GM13976 (cell line): ENCODE measurements at regions of chr22 and their contacts with region 1.

Region 1: DNA sequence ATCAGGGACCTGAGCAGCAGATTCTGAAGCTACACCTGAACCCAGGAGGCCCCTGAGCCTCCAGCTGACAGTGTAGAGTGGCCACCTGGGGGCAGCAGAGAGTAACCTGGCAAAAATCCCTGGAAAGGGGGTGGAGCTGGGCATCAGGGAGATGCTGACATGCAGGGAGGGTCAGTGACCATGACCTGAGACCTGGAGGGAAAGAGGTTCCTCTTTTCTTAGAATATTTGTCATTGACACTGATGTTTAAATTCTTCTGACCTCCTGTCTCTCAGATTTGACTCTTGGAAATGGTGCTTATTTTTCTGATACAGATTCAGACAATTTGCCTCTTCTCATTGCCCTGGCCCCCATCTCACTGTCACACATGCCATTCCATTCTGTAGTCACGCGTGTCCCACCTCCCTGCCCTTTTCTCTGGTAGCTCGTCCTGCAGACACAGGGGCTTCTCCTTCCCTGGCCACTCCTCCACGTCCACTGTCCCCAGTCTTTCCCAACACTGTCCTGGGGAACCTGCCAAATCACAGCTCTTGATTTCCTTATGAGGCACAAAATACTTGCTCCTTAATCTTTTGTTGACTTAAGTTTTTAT is 117.2 kb upstream of the IGLL5 start:
- DNase-seq: no peak
- CTCF ChIP-seq: peak; percentile 68

Region 2: GRCh38 chr22:23054531-23055257 is 284.3 kb after region 1 on chr22:
- in situ Hi-C with region 1: no loop called
- DNase-seq: peak; percentile 65
- CTCF ChIP-seq: no peak

Region 3: GRCh38 chr22:23137905-23138561 is 367.7 kb after region 1 on chr22:
- in situ Hi-C with region 1: loop called (anchors 10 kb)
- DNase-seq: peak; percentile 69
- CTCF ChIP-seq: no peak